ENCODE measurements at regions of chr5 and their contacts with region 1.

Region 1: GRCh38 chr5:149990518-149991376 is 9.7 kb downstream of the TIGD6 start:
- DNase-seq: peak; percentile 69 to 83 (median 73)
- ATAC-seq: peak; percentile 92
- H3K4me3 ChIP-seq: no peak overlapping the region
- H3K27ac ChIP-seq: no peak overlapping the region
- H3K4me1 ChIP-seq: no peaks in the 10 kb centered on the region; a peak in 2 of 5 replicates
- H3K27me3 ChIP-seq: no peaks in the 10 kb centered on the region
- CTCF ChIP-seq: peak; percentile 87 to 97 (median 91)
- EP300 ChIP-seq: no peak
- POLR2A ChIP-seq: no peak
- RAD21 ChIP-seq: peak; percentile 94 to 97

Region 2: GRCh38 chr5:149852641-149853330 is 138.0 kb before region 1 on chr5:
- CTCF ChIA-PET with region 1: interaction called, 7 read pairs
- POLR2A ChIA-PET with region 1: no interaction called
- in situ Hi-C with region 1: no loop called
- intact Hi-C with region 1: loop called (anchors 5 kb)
- DNase-seq: peak; percentile 68 to 82 (median 71)
- ATAC-seq: peak; percentile 96
- H3K4me3 ChIP-seq: no peak overlapping the region
- H3K27ac ChIP-seq: no peak overlapping the region; the same call in 2 of the 3 replicates
- H3K4me1 ChIP-seq: no peaks in the 10 kb centered on the region
- H3K27me3 ChIP-seq: no peaks in the 10 kb centered on the region
- CTCF ChIP-seq: peak; percentile 81 to 94 (median 87)
- EP300 ChIP-seq: no peak
- POLR2A ChIP-seq: no peak
- RAD21 ChIP-seq: peak; percentile 69 to 81

Region 3: GRCh38 chr5:149902177-149902576 is 88.6 kb before region 1 on chr5:
- CTCF ChIA-PET with region 1: interaction called, 3 read pairs
- POLR2A ChIA-PET with region 1: no interaction called
- in situ Hi-C with region 1: no loop called
- intact Hi-C with region 1: loop called (anchors 1 kb)
- DNase-seq: peak in 1 of 4 experiments; percentile 32
- ATAC-seq: peak; percentile 83
- H3K4me3 ChIP-seq: no peak overlapping the region
- H3K27ac ChIP-seq: no peak overlapping the region
- H3K4me1 ChIP-seq: peaks cover 4 to 7% of the 10 kb centered on the region in 2 experiments; a peak in 3 of 5 replicates
- H3K27me3 ChIP-seq: no peaks in the 10 kb centered on the region
- CTCF ChIP-seq: peak; percentile 29 to 55 (median 47); a peak in 5 of 6 replicates
- EP300 ChIP-seq: no peak
- POLR2A ChIP-seq: no peak
- RAD21 ChIP-seq: peak; percentile 41 to 67

Measured in K562 (cell line).